ENCODE measurements at regions of chr4 and their contacts with region 1.

Region 1: DNA sequence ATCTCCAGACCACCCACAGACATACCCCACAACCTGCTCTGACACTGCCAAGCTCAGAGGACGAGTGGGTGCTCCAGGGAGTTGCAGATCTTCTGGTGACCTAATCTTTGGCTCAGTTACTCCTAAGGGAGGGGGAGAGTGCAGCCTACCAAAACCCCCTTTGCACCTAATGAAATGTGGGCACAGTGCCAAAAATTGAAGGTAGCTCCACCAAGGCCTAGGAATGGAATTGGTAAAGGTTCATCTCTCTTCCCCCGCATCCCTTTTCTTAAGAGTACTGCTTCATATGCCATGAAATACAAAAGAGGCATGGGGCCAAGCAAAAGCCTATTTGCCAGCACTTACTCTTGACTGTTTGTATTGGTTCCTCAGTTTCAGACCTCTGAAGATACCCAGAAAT is 491.0 kb downstream of the NAF1 start:
- DNase-seq: no peak
- H3K4me3 ChIP-seq: no peak overlapping the region
- H3K27ac ChIP-seq: no peak overlapping the region
- H3K4me1 ChIP-seq: no peaks in the 10 kb centered on the region
- H3K27me3 ChIP-seq: no peaks in the 10 kb centered on the region
- CTCF ChIP-seq: no peak
- POLR2A ChIP-seq: no peak

Region 2: DNA sequence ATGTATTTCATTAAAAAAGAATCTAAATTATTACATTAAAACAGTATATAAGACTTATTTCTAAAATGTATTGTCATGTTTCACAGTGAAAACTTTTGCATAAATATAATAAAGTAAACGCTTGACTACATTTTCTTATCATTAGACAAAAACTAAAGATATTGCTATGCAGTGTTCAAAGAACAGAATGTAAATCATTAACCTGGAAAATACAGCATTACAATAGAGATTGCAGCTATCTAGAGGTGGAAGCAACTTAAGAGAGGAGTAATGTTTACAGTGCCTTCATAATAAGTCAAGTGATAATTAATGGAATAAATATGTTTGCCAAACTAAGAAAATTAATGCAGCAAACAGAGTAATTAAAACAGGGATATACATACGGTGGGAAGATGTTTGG is 1452.8 kb before region 1 on chr4:
- intact Hi-C with region 1: no loop called
- DNase-seq: no peak
- H3K4me3 ChIP-seq: no peak overlapping the region
- H3K27ac ChIP-seq: no peak overlapping the region
- H3K4me1 ChIP-seq: no peaks in the 10 kb centered on the region
- H3K27me3 ChIP-seq: no peaks in the 10 kb centered on the region
- CTCF ChIP-seq: no peak
- POLR2A ChIP-seq: no peak

Region 3: DNA sequence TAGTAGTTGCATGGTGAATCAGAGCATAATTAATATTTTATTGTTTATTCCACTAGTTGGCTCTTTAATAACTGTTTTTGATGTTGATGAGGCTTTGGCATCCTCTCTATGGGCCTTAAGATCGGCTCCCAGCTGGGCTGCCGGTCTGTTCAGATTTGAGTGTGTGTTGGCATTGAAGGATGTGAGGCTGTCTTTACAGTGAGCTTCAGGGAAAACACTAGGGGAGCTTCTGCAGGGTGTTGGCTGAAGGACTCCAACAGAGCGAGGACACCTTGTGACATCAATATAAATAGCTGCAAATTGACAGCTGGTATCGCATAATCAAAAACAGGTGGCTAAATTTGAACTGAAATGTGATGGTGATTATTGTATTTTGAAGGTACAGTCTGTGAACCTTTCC is 833.9 kb before region 1 on chr4:
- intact Hi-C with region 1: no loop called
- DNase-seq: no peak
- H3K4me3 ChIP-seq: no peak overlapping the region
- H3K27ac ChIP-seq: no peak overlapping the region
- H3K4me1 ChIP-seq: no peaks in the 10 kb centered on the region
- H3K27me3 ChIP-seq: no peaks in the 10 kb centered on the region
- CTCF ChIP-seq: no peak
- POLR2A ChIP-seq: no peak

Region 4: GRCh38 chr4:164154416-164154815 is 1478.8 kb after region 1 on chr4:
- intact Hi-C with region 1: loop called (anchors 10 kb)
- DNase-seq: no peak
- H3K4me3 ChIP-seq: no peak overlapping the region
- H3K27ac ChIP-seq: no peak overlapping the region
- H3K4me1 ChIP-seq: no peaks in the 10 kb centered on the region
- H3K27me3 ChIP-seq: no peaks in the 10 kb centered on the region
- CTCF ChIP-seq: no peak
- POLR2A ChIP-seq: no peak